Activated CD4-positive, alpha-beta T cell treated with anti-CD3 and anti-CD28 coated beads, Interleukin-2, amount 10 ng/mL, durations not matched to agents 24 days and 14 days (primary cell): ENCODE measurements at regions of chr11 and their contacts with region 1.

Region 1: DNA sequence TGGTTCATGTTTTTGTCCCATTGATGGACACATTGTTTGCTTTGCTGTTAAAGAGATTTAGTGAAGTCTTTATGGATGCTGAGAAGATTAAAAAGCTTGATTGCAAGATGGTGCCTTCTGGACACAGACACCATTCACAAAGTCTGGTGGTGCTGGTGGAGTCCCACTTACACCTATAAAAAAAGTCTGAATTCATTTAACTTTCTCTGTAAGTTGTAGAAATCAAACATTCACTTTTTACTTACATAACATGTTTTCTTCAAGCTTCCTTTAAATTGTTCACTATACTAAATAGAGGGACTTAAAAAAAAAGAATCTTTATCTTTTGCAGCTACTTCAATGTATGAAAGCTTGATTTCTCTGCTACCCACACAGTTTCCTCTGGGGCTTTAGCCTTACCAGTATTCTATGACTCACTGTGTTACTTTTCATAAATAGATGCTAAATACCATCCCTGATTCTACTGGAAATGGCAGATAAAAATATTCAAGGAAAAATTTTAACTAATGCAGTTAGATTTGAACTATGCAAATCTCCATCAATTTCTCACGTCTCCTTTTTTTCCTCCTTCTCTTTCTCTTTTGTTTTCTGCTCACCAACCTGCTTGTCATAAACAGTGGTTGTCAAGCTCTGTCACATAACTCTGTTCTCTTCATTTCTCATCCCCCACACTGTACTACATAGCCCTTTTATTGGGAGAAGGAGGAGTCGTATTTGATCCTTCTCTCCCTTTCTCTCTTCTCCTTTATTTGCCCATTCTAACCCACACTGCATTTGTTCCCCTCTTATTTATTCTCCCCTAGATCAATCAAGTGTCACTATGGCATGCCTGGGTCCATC is 89.7 kb downstream of the FAM76B start:
- DNase-seq: no peak
- H3K4me3 Mint-ChIP-seq: peak overlapping the region; percentile 79
- H3K27ac Mint-ChIP-seq: peak overlapping the region; percentile 98
- H3K4me1 Mint-ChIP-seq: peaks cover 55% of the 10 kb centered on the region
- H3K27me3 Mint-ChIP-seq: no peaks in the 10 kb centered on the region

Region 2: DNA sequence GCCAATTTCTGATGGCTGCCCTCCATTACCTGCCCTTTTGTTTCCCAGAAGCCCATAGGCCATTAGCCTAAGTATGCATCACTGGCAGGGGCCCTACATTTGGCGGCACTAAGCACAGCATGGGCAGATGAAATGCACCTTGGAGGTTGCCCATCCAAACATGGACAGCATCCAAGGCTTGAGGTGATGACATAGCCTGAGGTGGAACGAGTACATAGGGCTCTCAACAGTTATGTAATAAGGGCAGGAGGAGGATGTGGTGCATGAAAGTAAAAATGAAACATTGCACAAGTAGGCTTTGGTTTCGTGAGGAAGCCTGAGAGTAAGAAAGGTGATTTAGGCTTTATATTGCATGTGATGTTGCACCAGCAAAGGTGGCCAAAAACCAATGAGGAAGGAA is 58.4 kb before region 1 on chr11:
- intact Hi-C with region 1: loop called (anchors 5 kb)
- DNase-seq: peak; percentile 84
- H3K4me3 Mint-ChIP-seq: no peak overlapping the region
- H3K27ac Mint-ChIP-seq: peak overlapping the region; percentile 55
- H3K4me1 Mint-ChIP-seq: peaks cover 17% of the 10 kb centered on the region
- H3K27me3 Mint-ChIP-seq: no peaks in the 10 kb centered on the region

Region 3: GRCh38 chr11:95674657-95675358 is 25.0 kb before region 1 on chr11:
- intact Hi-C with region 1: loop called (anchors 1 kb)
- DNase-seq: no peak
- H3K4me3 Mint-ChIP-seq: no peak overlapping the region
- H3K27ac Mint-ChIP-seq: peak overlapping the region; percentile 87
- H3K4me1 Mint-ChIP-seq: peaks cover 41% of the 10 kb centered on the region
- H3K27me3 Mint-ChIP-seq: no peaks in the 10 kb centered on the region

Region 4: GRCh38 chr11:95680169-95680929 is 19.5 kb before region 1 on chr11:
- intact Hi-C with region 1: loop called (anchors 1 kb)
- DNase-seq: no peak
- H3K4me3 Mint-ChIP-seq: peak overlapping the region; percentile 55
- H3K27ac Mint-ChIP-seq: peak overlapping the region; percentile 76
- H3K4me1 Mint-ChIP-seq: peaks cover 82% of the 10 kb centered on the region
- H3K27me3 Mint-ChIP-seq: no peaks in the 10 kb centered on the region

Region 5: GRCh38 chr11:95688580-95689189 is 11.2 kb before region 1 on chr11:
- intact Hi-C with region 1: loop called (anchors 1 kb)
- DNase-seq: peak; percentile 83
- H3K4me3 Mint-ChIP-seq: no peak overlapping the region
- H3K27ac Mint-ChIP-seq: no peak overlapping the region
- H3K4me1 Mint-ChIP-seq: peaks cover 27% of the 10 kb centered on the region
- H3K27me3 Mint-ChIP-seq: no peaks in the 10 kb centered on the region

Region 6: DNA sequence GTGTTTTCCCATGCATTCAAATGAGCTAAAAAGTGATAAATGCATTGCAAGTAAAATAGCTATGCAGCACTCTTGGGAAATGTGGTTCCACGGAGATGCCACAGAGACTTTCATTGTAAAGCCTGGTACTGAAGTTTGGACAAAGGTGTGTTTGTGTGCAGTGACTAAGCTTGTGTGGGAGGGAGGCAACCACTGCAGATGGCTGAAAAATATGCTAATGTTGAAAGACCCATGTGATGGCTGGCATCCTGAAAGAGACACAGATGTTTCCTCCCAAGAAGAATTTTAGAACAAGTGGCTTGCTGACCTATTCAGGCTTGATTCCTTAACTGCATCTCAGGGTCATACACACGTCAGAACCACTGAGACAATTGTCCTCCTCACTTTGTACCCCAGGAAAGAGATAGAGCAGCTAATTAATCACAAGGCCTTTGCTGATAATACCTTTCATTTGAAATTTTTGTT is 16.0 kb after region 1 on chr11:
- intact Hi-C with region 1: loop called (anchors 1 kb)
- DNase-seq: peak; percentile 73
- H3K4me3 Mint-ChIP-seq: peak overlapping the region; percentile 57
- H3K27ac Mint-ChIP-seq: peak overlapping the region; percentile 84
- H3K4me1 Mint-ChIP-seq: peaks cover 45% of the 10 kb centered on the region
- H3K27me3 Mint-ChIP-seq: no peaks in the 10 kb centered on the region

Region 7: DNA sequence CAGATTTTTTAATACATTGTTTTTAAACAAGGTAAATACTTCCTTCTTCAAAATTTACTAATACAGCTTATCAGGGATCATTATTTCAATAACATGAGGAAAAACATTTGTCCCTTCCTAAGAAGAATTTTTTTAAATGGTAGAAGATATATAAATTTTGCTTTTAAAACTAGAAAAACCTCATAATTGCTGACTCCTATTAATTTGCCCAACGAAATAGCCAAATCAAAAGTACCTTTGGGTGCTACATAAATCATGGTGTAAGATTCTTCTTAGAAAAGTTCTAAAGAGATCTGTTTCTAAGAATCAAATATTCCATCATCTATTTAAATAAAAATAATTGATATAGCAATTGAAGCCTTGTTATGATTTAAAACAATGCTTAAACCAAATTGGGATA is 145.3 kb after region 1 on chr11:
- intact Hi-C with region 1: no loop called
- DNase-seq: no peak
- H3K4me3 Mint-ChIP-seq: no peak overlapping the region
- H3K27ac Mint-ChIP-seq: no peak overlapping the region
- H3K4me1 Mint-ChIP-seq: no peaks in the 10 kb centered on the region
- H3K27me3 Mint-ChIP-seq: no peaks in the 10 kb centered on the region